HCT116 (cell line): ENCODE measurements at regions of chr11 and their contacts with region 1.

Region 1: DNA sequence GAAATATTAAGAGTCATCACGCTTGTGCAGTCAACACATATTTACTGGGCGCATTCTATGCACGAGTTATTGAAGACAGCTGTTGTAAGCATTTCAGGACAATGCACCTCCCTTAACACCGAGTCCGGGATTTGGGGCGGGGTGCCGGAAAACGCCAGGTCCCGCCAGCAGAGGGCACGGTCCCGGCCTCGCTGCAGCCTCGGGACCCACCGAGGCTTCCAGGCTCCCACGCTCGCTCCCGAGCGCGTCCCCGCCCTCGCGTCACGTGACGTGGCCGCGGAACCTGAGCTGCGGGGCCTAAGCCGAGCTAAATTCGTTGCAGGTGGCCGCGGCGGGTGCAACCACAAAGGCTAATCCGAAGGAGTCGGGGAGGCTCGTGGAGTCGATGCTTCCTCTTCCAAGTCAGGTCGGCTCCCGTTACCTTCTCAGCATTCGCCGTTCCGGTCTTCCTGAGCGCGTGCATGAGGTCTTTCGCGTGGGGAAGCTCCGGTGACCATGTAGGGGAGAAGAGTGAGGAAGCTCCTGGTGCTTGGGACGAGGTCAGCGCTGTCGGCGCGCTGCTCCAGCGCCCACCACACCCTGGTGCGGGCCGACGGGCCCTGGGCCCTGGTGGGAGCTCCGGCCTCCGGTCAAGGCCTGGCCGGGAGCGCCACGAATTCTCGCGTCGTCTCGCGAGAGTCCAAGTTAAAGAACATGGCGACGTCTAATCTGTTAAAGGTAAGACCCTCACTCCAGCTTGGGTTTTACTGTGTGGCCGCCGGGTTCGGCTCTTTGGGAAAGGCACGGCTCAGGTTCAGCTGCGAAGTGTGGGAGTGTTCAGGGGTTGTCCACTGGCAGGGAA is at the start of gene CUL5:
- DNase-seq: peak; percentile 86
- ATAC-seq: peak; percentile 95
- H3K4me3 ChIP-seq: peak within 1 kb of the TSS; percentile 93 to 94
- H3K27ac ChIP-seq: peak within 1 kb of the TSS; percentile 92
- H3K4me1 ChIP-seq: peaks cover 2 to 21% of the 10 kb centered on the region in 2 experiments; a peak in 3 of 4 replicates
- H3K27me3 ChIP-seq: no peaks in the 10 kb centered on the region
- CTCF ChIP-seq: peak; percentile 63 to 88 (median 83)
- POLR2A ChIP-seq: peak; percentile 91
- RAD21 ChIP-seq: peak; percentile 61
- total RNA-seq, gene CUL5: 41.9 TPM

Region 2: GRCh38 chr11:108025387-108026080 is 16.7 kb after region 1 on chr11:
- CTCF ChIA-PET with region 1: interaction called, 15 read pairs
- POLR2A ChIA-PET with region 1: no interaction called
- RAD21 ChIA-PET with region 1: no interaction called
- intact Hi-C with region 1: no loop called
- DNase-seq: no peak
- ATAC-seq: no peak
- H3K4me3 ChIP-seq: no peak overlapping the region
- H3K27ac ChIP-seq: no peak overlapping the region
- H3K4me1 ChIP-seq: no peaks in the 10 kb centered on the region
- H3K27me3 ChIP-seq: no peaks in the 10 kb centered on the region
- CTCF ChIP-seq: no peak
- POLR2A ChIP-seq: no peak
- RAD21 ChIP-seq: no peak

Region 3: DNA sequence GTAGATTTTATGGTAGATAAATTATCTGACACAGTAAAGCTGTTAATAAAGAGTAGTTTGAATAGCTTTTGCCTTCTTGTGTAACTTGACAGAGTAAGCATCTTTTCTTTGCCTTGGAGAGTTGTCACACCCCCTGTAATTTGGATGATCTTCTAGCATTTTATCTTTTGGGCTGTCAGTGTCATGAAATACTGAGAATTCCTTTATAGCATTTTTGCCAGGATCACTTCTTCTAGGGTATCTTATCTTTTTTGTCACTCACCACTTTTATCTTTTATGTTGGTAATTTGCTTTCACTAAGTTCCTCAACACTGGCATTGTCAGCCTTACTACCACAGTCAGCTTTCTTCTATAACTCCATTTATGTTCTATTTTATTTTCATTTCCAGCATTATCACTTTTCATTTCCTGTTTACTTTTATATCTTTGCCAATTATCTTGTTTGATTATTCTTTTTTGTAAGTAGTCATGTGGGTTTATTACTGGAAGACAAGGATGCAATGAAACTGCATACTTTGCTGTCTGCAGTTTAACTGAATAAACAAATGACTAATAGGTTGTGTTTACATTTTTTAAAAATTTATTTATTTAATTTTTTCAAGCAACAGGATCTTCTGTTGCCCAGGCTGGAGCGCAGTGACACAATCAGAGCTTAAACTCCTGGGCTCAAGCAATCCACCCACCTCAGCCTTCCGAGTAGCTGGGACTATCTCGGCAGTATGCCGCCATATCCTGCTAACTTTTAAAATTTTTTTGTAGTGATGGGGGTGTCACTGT is 84.4 kb after region 1 on chr11:
- CTCF ChIA-PET with region 1: no interaction called
- POLR2A ChIA-PET with region 1: no interaction called
- RAD21 ChIA-PET with region 1: no interaction called
- intact Hi-C with region 1: no loop called
- DNase-seq: no peak
- ATAC-seq: no peak
- H3K4me3 ChIP-seq: no peak overlapping the region
- H3K27ac ChIP-seq: no peak overlapping the region
- H3K4me1 ChIP-seq: no peaks in the 10 kb centered on the region
- H3K27me3 ChIP-seq: no peaks in the 10 kb centered on the region
- CTCF ChIP-seq: no peak
- POLR2A ChIP-seq: no peak
- RAD21 ChIP-seq: no peak

Region 4: GRCh38 chr11:108405706-108406105 is 396.8 kb after region 1 on chr11:
- CTCF ChIA-PET with region 1: no interaction called
- POLR2A ChIA-PET with region 1: no interaction called
- RAD21 ChIA-PET with region 1: no interaction called
- intact Hi-C with region 1: no loop called
- DNase-seq: no peak
- ATAC-seq: no peak
- H3K4me3 ChIP-seq: no peak overlapping the region
- H3K27ac ChIP-seq: no peak overlapping the region
- H3K4me1 ChIP-seq: no peaks in the 10 kb centered on the region
- H3K27me3 ChIP-seq: no peaks in the 10 kb centered on the region
- CTCF ChIP-seq: no peak
- POLR2A ChIP-seq: no peak
- RAD21 ChIP-seq: no peak

Region 5: GRCh38 chr11:108483163-108483562 is 474.3 kb after region 1 on chr11:
- CTCF ChIA-PET with region 1: no interaction called
- POLR2A ChIA-PET with region 1: no interaction called
- RAD21 ChIA-PET with region 1: no interaction called
- intact Hi-C with region 1: no loop called
- DNase-seq: no peak
- ATAC-seq: no peak
- H3K4me3 ChIP-seq: no peak overlapping the region
- H3K27ac ChIP-seq: no peak overlapping the region
- H3K4me1 ChIP-seq: peaks cover 3% of the 10 kb centered on the region in 2 experiments; a peak in 1 of 4 replicates
- H3K27me3 ChIP-seq: no peaks in the 10 kb centered on the region
- CTCF ChIP-seq: no peak
- POLR2A ChIP-seq: no peak
- RAD21 ChIP-seq: no peak

Region 6: GRCh38 chr11:108654994-108655631 is 646.2 kb after region 1 on chr11:
- CTCF ChIA-PET with region 1: interaction called, 7 read pairs
- POLR2A ChIA-PET with region 1: no interaction called
- RAD21 ChIA-PET with region 1: no interaction called
- intact Hi-C with region 1: loop called (anchors 2 kb)
- DNase-seq: peak; percentile 54
- ATAC-seq: peak; percentile 91
- H3K4me3 ChIP-seq: no peak overlapping the region
- H3K27ac ChIP-seq: no peak overlapping the region
- H3K4me1 ChIP-seq: no peaks in the 10 kb centered on the region
- H3K27me3 ChIP-seq: no peaks in the 10 kb centered on the region
- CTCF ChIP-seq: peak; percentile 64 to 82 (median 80)
- POLR2A ChIP-seq: no peak
- RAD21 ChIP-seq: peak; percentile 94

Region 7: DNA sequence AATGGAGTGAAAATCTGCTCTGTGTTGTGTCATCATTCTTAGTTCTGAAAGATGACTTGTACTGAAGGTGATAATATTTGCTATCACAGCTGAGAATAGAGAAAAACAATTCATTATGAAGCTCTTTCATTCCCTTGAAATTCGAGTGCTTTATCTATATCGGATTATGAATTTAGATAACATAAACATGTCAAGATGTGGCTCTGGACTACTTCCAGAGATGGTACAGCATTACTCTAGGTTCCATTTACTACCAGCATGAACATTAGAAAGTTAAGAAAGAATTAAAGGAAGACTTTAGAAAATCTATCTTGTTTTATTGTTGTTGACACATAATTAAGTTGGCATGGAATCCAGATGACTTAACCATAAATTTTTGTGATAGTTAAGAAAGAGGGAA is 838.4 kb after region 1 on chr11:
- CTCF ChIA-PET with region 1: no interaction called
- POLR2A ChIA-PET with region 1: no interaction called
- RAD21 ChIA-PET with region 1: no interaction called
- intact Hi-C with region 1: no loop called
- DNase-seq: no peak
- ATAC-seq: no peak
- H3K4me3 ChIP-seq: no peak overlapping the region
- H3K27ac ChIP-seq: no peak overlapping the region
- H3K4me1 ChIP-seq: no peaks in the 10 kb centered on the region
- H3K27me3 ChIP-seq: no peaks in the 10 kb centered on the region
- CTCF ChIP-seq: no peak
- POLR2A ChIP-seq: no peak
- RAD21 ChIP-seq: no peak